ENCODE measurements at regions of chr1 and their contacts with region 1.

Region 1: DNA sequence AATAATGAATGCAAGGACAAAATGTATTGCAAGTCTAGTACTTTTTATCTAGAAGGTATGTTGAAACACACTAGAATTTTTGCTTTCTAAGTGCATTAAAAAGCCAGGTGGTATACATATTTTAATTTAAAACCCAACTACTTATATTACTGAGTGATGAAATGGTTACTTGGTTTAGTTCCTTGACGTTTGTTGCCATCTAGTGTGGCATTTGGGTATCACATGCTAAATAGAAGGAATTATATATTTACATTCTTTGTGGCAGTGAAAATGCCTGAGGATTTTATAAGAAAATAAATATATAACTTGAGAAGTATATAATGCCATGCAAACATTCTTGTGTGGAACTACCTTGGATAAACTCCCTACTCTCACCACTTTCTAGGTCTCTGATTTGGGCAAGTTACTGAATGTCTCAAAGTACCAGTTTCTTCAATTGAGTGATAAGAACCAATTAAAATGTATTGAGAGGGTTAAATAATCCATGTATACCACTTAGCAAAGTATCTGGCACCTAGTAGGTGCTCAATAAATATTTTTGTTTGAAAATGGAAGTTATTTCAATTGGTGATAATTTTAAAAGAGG is 69.6 kb downstream of the SDCCAG8 start:
- DNase-seq: no peak
- H3K4me3 ChIP-seq: no peak overlapping the region
- H3K27ac ChIP-seq: no peak overlapping the region
- H3K4me1 ChIP-seq: no peaks in the 10 kb centered on the region
- H3K27me3 ChIP-seq: no peaks in the 10 kb centered on the region
- CTCF ChIP-seq: peak; percentile 62 to 80 (median 64)
- EP300 ChIP-seq: no peak
- POLR2A ChIP-seq: no peak

Region 2: DNA sequence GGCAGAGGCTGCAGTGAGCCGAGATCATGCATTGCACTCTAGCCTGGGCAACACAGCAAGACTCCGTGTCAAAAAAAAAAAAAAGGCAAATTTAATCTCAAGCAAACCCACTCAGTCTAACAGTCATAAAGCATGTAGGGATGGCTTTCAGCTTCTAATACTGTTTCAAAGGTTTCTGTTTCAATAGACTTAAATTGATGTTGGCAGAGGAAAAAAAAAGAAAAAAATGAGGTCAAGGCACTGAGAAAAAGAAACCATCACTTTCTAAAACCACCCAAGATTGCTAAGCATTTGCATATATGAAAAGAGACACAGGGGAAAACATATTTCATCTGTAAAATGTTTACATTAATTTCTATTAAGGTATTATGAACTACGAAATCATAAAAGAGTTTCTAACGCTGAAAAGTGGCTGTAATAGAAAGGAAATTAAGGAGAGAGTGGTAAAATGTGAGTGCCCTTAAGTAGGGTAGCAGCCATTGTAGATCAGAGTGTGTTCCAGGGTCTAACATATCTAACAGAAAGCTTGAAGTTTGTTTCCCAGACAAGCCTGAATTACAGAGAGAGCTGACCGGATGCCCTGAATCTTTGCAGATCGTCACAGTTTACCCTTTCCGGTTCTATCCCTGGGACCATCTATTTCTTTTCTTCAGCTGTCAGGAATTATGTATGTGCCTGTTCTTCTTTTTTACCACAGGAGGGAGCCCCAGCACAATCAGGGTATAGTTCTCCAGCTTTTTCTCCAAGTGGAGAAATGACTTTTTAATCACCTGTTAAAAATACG is 870.9 kb before region 1 on chr1:
- intact Hi-C with region 1: loop called in 1 of 4 experiments (anchors 10 kb)
- DNase-seq: no peak
- H3K4me3 ChIP-seq: no peak overlapping the region
- H3K27ac ChIP-seq: no peak overlapping the region
- H3K4me1 ChIP-seq: no peaks in the 10 kb centered on the region
- H3K27me3 ChIP-seq: no peaks in the 10 kb centered on the region
- CTCF ChIP-seq: peak in 2 of 3 donors; percentile 14 to 34
- EP300 ChIP-seq: no peak
- POLR2A ChIP-seq: no peak

Region 3: DNA sequence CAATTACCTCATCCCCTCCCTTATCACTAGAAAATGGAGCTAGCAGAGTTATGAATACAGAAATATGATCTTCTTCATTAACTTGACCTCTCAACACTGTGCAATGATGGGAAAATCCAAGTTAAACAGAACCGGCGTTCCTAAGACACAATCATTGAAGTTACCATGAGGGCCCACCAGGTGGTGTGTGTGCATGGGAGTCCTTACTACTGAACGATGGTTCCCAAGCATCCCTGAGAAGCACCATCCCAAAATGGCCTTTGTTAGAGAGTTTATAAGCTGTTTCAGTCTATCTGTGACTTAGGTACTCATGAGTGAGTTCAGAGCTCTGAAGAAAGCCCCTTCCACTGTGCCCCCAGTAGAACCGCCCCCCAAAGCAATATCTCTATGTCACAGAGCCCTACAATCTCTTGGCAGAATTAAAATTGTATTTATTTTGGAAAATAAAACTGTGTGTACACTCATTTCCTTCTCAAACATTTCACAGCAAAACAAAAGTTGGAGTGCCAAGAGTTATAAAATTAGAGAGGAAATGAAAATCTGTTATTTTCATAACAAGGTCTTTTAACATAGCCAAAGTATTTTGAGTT is 857.7 kb before region 1 on chr1:
- intact Hi-C with region 1: loop called in 2 of 4 experiments (anchors 5 to 10 kb)
- DNase-seq: peak; percentile 42 to 80 (median 63)
- H3K4me3 ChIP-seq: no peak overlapping the region
- H3K27ac ChIP-seq: no peak overlapping the region
- H3K4me1 ChIP-seq: peaks cover 4% of the 10 kb centered on the region
- H3K27me3 ChIP-seq: no peaks in the 10 kb centered on the region
- CTCF ChIP-seq: peak; percentile 27 to 54 (median 43)
- EP300 ChIP-seq: no peak
- POLR2A ChIP-seq: no peak

Region 4: DNA sequence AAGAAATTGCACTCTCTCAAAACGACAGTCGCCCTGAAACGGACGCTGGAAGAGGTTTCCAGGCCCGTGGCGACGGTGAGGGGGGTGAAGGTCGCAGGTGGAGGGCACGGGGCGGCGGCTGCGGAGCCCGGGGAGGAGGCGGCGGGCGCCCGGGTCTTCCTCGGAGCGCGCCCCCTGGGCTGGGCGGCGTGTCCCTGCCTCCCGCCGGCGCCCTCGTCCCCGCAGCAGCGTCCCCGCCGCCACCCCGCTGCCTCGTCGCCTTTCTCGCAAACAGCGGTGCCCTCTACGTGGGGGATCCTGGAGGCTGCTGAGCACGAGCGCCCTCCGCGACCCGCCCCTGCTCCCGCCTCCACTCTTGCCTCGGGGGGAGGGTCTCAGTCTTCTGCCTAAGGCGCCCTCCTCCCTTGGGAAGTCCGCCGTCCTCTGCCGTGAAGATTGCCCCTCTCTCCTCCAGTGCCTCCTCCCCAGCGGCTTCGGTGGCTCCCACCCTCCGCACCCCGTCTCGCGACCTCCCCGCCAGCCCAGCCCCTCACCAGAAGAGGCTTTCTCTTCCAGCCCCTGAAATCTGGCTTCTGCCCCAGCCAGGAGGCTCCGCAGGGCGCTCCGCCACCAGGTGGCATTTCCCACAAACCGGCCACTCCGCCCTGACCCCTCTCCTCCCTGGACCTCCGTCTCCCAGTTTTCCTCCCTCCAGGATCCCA is 157.8 kb after region 1 on chr1:
- intact Hi-C with region 1: no loop called
- DNase-seq: peak in 1 of 5 donors; percentile 38
- H3K4me3 ChIP-seq: peak overlapping the region; percentile 15
- H3K27ac ChIP-seq: peak overlapping the region in 1 of 2 donors; percentile 5
- H3K4me1 ChIP-seq: peaks cover 7% of the 10 kb centered on the region
- H3K27me3 ChIP-seq: no peaks in the 10 kb centered on the region
- CTCF ChIP-seq: no peak
- EP300 ChIP-seq: no peak
- POLR2A ChIP-seq: no peak